Mammary epithelial cell (primary cell): ENCODE measurements at regions of chr11 and their contacts with region 1.

Region 1: DNA sequence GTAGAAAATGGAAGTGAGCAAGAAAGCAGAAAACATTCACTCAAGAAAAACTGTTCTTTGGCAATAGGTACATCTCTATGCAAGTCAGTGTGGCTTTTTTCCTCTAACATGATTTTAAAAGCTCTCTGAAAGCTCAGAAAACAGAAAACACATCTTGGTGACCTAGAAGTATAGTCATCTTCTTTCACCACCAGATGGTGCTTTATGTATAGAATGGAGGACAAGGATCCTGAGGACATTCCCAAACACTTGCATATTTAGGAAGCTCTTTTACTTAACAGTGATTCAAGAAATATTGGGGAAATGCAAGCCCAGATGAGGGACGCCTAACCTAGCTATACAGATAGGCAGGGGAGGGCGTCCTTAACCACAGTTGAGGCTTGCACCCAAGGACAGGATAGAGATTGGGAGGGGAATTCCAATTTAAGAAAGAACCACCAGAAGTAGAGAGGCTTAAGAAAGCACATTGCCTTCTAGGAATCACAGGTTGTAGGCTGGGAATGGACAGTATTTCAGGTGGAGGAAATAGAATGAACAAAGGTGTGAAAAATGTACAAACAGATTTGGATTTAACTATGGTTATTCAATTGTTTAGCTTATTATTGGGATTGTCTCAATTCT is 13.8 kb upstream of the CCDC81 start:
- DNase-seq: peak; percentile 31
- H3K4me3 ChIP-seq: no peak overlapping the region
- H3K27ac ChIP-seq: no peak overlapping the region
- H3K4me1 ChIP-seq: no peaks in the 10 kb centered on the region
- H3K27me3 ChIP-seq: no peaks in the 10 kb centered on the region
- CTCF ChIP-seq: peak; percentile 33 to 64

Region 2: DNA sequence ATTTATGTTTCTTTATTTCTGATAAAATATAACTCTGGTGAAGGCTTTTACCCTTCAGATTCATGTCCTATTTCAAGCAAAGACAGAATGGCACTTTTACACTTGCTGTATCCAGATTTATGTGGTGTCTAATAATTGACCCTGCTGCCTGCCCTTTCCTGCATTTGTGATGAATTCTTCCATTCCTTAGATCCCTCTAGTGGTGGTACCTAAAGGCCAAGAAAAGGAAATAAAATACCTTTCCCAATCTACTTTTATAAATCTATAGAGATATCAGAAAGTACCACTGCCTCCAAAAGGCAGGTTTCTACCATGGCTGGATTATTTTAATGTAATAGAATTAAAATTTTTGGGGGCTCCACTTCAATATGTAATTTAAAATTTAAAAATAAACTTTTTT is 48.0 kb after region 1 on chr11:
- CTCF ChIA-PET with region 1: no interaction called
- dilution Hi-C with region 1: no loop called
- in situ Hi-C with region 1: no loop called
- intact Hi-C with region 1: loop called (anchors 2 kb)
- DNase-seq: no peak
- H3K4me3 ChIP-seq: no peak overlapping the region
- H3K27ac ChIP-seq: no peak overlapping the region
- H3K4me1 ChIP-seq: peaks cover 5% of the 10 kb centered on the region
- H3K27me3 ChIP-seq: no peaks in the 10 kb centered on the region
- CTCF ChIP-seq: peak; percentile 26 to 43